ENCODE measurements at regions of chr7 and their contacts with region 1.

Region 1: GRCh38 chr7:47266131-47266706 is 315.7 kb downstream of the TNS3 start:
- DNase-seq: peak; percentile 10
- H3K4me3 ChIP-seq: no peak overlapping the region
- H3K27me3 ChIP-seq: no peaks in the 10 kb centered on the region
- CTCF ChIP-seq: peak; percentile 90

Region 2: GRCh38 chr7:45881759-45882464 is 1384.3 kb before region 1 on chr7:
- CTCF ChIA-PET with region 1: interaction called, 3 read pairs
- POLR2A ChIA-PET with region 1: interaction called, 10 read pairs
- DNase-seq: peak; percentile 50
- H3K4me3 ChIP-seq: no peak overlapping the region
- H3K27me3 ChIP-seq: no peaks in the 10 kb centered on the region
- CTCF ChIP-seq: no peak

Region 3: GRCh38 chr7:47254081-47255006 is 11.9 kb before region 1 on chr7:
- CTCF ChIA-PET with region 1: interaction called, 18 read pairs
- POLR2A ChIA-PET with region 1: no interaction called
- DNase-seq: no peak
- H3K4me3 ChIP-seq: peak overlapping the region; percentile 57
- H3K27me3 ChIP-seq: no peaks in the 10 kb centered on the region
- CTCF ChIP-seq: peak; percentile 49

Region 4: DNA sequence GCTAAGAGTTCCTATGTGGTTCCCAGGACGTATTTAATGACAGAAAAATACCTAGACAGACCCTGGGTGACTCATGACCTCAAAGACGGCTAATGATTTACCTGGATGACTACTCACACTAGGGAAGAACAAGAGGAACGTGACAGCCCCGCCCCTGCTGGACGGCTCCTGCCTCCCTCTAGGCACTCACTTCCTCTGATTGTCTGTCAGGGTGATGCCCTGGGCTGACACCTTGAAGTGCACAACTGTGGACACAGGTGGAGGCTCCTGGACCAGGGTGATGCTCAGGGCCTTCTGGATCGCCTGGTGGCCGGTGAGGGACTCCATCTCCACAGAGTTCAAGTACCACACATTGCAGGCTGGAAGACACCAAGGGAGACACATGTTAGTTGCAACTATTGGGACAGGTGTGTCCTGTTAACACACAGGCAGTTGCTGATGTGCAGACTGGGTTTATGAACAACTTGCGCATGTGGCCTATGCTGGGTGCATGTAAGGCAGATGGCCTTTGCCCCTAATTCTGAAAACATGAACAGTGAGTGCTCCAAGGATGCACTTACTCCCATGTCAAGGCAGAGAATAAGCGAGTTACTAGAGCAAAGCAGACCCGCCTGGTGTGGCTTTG is 17.4 kb after region 1 on chr7:
- CTCF ChIA-PET with region 1: interaction called, 32 read pairs
- POLR2A ChIA-PET with region 1: interaction called, 15 read pairs
- DNase-seq: no peak
- H3K4me3 ChIP-seq: no peak overlapping the region
- H3K27me3 ChIP-seq: no peaks in the 10 kb centered on the region
- CTCF ChIP-seq: no peak

Region 5: GRCh38 chr7:47435889-47436312 is 169.7 kb after region 1 on chr7:
- CTCF ChIA-PET with region 1: interaction called, 10 read pairs
- POLR2A ChIA-PET with region 1: no interaction called
- DNase-seq: peak; percentile 54
- H3K4me3 ChIP-seq: no peak overlapping the region
- H3K27me3 ChIP-seq: no peaks in the 10 kb centered on the region
- CTCF ChIP-seq: peak; percentile 73